HepG2 (cell line): ENCODE measurements at regions of chr12 and their contacts with region 1.

Region 1: DNA sequence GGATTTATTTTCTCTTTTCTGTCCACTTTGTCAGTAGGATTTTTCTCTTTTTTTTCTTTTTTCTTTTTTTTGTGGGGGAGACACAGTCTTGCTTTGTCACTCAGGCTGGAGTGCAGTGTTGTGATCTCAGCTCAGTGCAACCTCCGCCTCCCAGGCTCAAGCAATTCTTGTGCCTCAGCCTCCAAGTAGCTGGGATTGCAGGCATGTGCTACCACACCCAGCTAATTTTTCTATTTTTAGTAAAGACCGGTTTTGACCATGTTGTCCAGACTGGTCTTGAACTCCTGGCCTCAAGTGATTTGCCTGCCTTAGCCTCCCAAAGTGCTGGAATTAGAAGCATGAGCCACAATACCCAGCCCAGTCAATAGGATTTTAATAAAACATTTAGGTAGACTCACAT is 21.0 kb upstream of the TBK1 start:
- DNase-seq: no peak
- ATAC-seq: no peak
- H3K4me3 ChIP-seq: no peak overlapping the region
- H3K27ac ChIP-seq: no peak overlapping the region
- H3K4me1 ChIP-seq: peaks cover 32% of the 10 kb centered on the region
- H3K27me3 ChIP-seq: no peaks in the 10 kb centered on the region
- CTCF ChIP-seq: no peak
- EP300 ChIP-seq: no peak
- POLR2A ChIP-seq: no peak
- RAD21 ChIP-seq: no peak

Region 2: GRCh38 chr12:64403707-64404469 is 27.0 kb before region 1 on chr12 and contains the start of gene XPOT:
- CTCF ChIA-PET with region 1: no interaction called
- POLR2A ChIA-PET with region 1: no interaction called
- in situ Hi-C with region 1: no loop called
- intact Hi-C with region 1: no loop called
- DNase-seq: peak; percentile 92
- ATAC-seq: peak; percentile 94
- H3K4me3 ChIP-seq: peak within 1 kb of the TSS; percentile 78 to 95 (median 85)
- H3K27ac ChIP-seq: peak within 1 kb of the TSS; percentile 100
- H3K4me1 ChIP-seq: peaks cover 47% of the 10 kb centered on the region
- H3K27me3 ChIP-seq: no peaks in the 10 kb centered on the region; a peak in 1 of 5 replicates
- CTCF ChIP-seq: peak; percentile 27
- EP300 ChIP-seq: peak in 1 of 2 experiments; percentile 43; a peak in 1 of 4 replicates
- POLR2A ChIP-seq: peak; percentile 84 to 93
- RAD21 ChIP-seq: no peak
- total RNA-seq, gene XPOT: 102 and 136 TPM in 2 replicates

Region 3: GRCh38 chr12:64445490-64445889 is 14.6 kb after region 1 on chr12:
- CTCF ChIA-PET with region 1: no interaction called
- POLR2A ChIA-PET with region 1: no interaction called
- in situ Hi-C with region 1: no loop called
- intact Hi-C with region 1: loop called (anchors 1 kb)
- DNase-seq: no peak
- ATAC-seq: no peak
- H3K4me3 ChIP-seq: no peak overlapping the region
- H3K27ac ChIP-seq: no peak overlapping the region
- H3K4me1 ChIP-seq: peaks cover 5% of the 10 kb centered on the region
- H3K27me3 ChIP-seq: no peaks in the 10 kb centered on the region
- CTCF ChIP-seq: no peak
- EP300 ChIP-seq: no peak
- POLR2A ChIP-seq: no peak
- RAD21 ChIP-seq: no peak

Region 4: DNA sequence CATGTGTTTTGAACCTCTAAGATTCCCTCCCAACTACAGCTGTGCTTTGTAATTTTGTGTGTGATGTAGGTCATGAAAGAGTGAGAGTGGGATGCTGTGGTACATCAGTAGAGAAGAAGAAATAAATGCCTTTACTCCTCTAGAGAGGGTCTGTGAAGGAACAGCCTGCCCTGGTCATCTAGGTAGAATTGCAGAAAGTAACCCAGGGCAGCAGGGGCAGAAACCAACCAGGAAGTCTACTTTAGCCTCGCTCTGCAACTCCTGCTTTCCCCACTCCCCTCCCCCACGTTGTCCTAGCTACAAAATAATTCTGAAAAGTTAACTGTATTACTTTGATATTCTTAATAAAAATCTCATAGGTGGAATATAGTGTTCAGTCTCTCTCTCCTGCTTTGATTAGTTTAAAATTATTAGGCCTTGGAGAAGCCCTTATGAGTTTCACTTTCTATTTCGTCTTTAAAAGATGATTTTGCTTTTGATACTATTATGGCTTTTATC is 28.6 kb after region 1 on chr12:
- CTCF ChIA-PET with region 1: no interaction called
- POLR2A ChIA-PET with region 1: no interaction called
- in situ Hi-C with region 1: no loop called
- intact Hi-C with region 1: no loop called
- DNase-seq: no peak
- ATAC-seq: no peak
- H3K4me3 ChIP-seq: no peak overlapping the region
- H3K27ac ChIP-seq: no peak overlapping the region
- H3K4me1 ChIP-seq: peaks cover 54% of the 10 kb centered on the region
- H3K27me3 ChIP-seq: no peaks in the 10 kb centered on the region
- CTCF ChIP-seq: no peak
- EP300 ChIP-seq: no peak
- POLR2A ChIP-seq: no peak
- RAD21 ChIP-seq: no peak

Region 5: GRCh38 chr12:64571411-64571810 is 140.5 kb after region 1 on chr12:
- CTCF ChIA-PET with region 1: no interaction called
- POLR2A ChIA-PET with region 1: no interaction called
- in situ Hi-C with region 1: no loop called
- intact Hi-C with region 1: no loop called
- DNase-seq: no peak
- ATAC-seq: no peak
- H3K4me3 ChIP-seq: no peak overlapping the region
- H3K27ac ChIP-seq: no peak overlapping the region
- H3K4me1 ChIP-seq: peaks cover 40% of the 10 kb centered on the region
- H3K27me3 ChIP-seq: no peaks in the 10 kb centered on the region; a peak in 1 of 5 replicates
- CTCF ChIP-seq: no peak
- EP300 ChIP-seq: no peak
- POLR2A ChIP-seq: no peak
- RAD21 ChIP-seq: no peak